WTC11 (cell line): ENCODE measurements at regions of chr18 and their contacts with region 1.

Region 1: DNA sequence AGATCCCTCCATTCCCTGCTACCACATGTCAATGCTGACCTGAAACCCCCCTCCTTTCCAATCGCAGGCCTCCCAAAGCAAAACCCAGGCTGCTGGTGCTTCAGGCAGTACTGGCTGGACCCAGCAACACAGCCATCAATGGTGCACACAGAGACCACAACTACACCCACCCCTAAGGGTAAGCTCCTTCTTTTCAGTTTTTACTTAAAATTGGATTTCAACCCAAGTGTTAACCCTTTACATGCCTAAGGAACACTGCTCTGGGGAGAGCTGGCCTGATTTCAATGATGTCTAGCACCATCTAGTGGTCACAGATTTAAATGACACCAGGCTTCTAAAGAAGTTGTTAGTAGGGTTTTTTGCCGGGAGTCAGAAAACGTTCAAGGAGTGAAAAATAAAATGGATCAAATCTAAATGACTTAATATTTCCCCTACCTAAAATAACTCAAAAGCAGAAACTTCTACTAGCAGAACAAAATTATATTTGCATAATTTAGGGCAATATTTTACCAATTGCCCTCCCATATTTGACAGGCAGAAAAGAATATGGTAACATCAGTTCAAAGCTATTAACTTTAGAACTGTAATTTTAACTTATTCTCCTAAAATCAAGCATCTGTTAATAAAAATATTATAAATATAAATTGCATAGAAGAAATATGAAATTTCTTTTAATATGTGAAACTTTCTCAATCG is 24.6 kb downstream of the FECH start:
- DNase-seq: no peak
- ATAC-seq: peak; percentile 62
- H3K4me3 Mint-ChIP-seq: no peak overlapping the region
- H3K27ac Mint-ChIP-seq: no peak overlapping the region
- H3K4me1 Mint-ChIP-seq: peaks cover 7% of the 10 kb centered on the region
- H3K27me3 Mint-ChIP-seq: no peaks in the 10 kb centered on the region
- CTCF ChIP-seq: peak; percentile 75

Region 2: DNA sequence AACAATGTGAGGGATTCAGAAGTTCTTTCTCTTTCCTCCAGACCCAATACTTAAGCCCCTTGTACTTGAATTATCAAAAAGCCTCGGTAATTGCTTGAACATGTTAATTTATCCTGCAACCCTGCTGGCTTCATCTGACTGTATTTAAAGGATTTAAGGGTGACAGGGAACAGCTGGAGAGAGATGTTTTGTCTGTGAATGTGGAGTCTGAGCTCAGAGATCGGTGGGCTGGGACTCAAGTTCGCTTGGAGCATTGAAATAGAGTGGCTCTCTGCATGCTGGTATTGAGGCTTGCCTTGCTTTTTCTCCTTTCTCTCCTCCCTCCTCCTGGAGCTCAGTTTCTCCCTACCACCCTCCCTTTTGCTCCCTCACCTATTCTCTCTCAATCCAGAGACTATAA is 341.4 kb before region 1 on chr18:
- CTCF ChIA-PET with region 1: no interaction called
- POLR2A ChIA-PET with region 1: no interaction called
- DNase-seq: no peak
- ATAC-seq: peak; percentile 81
- H3K4me3 Mint-ChIP-seq: peak overlapping the region; percentile 16
- H3K27ac Mint-ChIP-seq: peak overlapping the region; percentile 37; the same call in 1 of the 2 replicates
- H3K4me1 Mint-ChIP-seq: peaks cover 31% of the 10 kb centered on the region
- H3K27me3 Mint-ChIP-seq: no peaks in the 10 kb centered on the region; the same call in 1 of the 2 replicates
- CTCF ChIP-seq: no peak

Region 3: GRCh38 chr18:57446322-57446721 is 115.6 kb before region 1 on chr18:
- CTCF ChIA-PET with region 1: interaction called, 10 read pairs
- POLR2A ChIA-PET with region 1: no interaction called
- DNase-seq: peak; percentile 73
- ATAC-seq: peak; percentile 59
- H3K4me3 Mint-ChIP-seq: no peak overlapping the region
- H3K27ac Mint-ChIP-seq: no peak overlapping the region
- H3K4me1 Mint-ChIP-seq: peaks cover 23% of the 10 kb centered on the region
- H3K27me3 Mint-ChIP-seq: peaks cover 56% of the 10 kb centered on the region
- CTCF ChIP-seq: peak; percentile 21

Region 4: GRCh38 chr18:57533006-57533867 is 28.6 kb before region 1 on chr18:
- CTCF ChIA-PET with region 1: interaction called, 14 read pairs
- POLR2A ChIA-PET with region 1: no interaction called
- DNase-seq: peak; percentile 33
- ATAC-seq: peak; percentile 84
- H3K4me3 Mint-ChIP-seq: no peak overlapping the region
- H3K27ac Mint-ChIP-seq: peak overlapping the region; percentile 97
- H3K4me1 Mint-ChIP-seq: peaks cover 31% of the 10 kb centered on the region
- H3K27me3 Mint-ChIP-seq: no peaks in the 10 kb centered on the region
- CTCF ChIP-seq: no peak